ENCODE measurements at regions of chr22 and their contacts with region 1.

Region 1: DNA sequence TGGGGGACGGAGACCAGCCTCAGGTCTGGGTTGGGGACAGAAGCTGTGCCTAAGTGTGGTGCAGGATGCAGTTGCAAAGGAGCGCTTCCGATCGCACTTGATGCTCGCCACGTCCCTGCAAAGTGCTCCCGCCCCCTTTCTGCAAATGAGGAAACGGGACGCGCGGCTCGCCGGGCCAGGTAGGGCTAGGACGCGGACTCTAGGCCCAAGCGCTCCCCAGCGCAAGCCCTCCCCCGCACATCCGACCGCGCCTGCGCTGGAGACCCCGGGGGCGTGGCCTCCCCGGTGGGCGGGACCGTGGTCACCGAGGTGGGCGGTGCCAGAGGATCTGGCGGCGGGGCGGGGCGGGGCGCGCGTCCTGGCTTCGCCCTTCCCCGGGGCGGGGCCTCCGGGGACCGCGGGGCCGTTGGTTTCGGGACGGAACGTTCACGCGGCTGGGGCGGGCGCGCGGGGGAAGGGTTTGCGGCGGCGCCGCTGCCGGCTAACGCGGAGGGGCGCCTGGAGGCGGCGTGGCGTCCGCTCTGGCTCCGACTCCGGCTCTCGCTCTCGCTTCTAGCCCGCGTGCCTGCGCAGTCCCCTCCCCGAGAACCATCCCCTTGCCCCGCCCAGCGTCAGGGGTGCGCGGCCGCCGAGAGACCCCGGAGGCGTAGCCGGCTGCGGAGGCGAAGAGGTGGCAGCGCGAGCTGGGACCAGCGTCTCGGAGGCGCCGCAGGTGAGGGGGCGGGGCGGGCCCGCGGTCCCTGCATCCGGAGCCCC is at the start of gene FAM118A:
- DNase-seq: peak; percentile 89 to 100 (median 96)
- ATAC-seq: peak; percentile 84
- H3K4me3 ChIP-seq: peak within 1 kb of the TSS; percentile 88 to 93
- H3K4me3 Mint-ChIP-seq: peak within 1 kb of the TSS; percentile 89
- H3K27ac ChIP-seq: peak within 1 kb of the TSS; percentile 76 to 86
- H3K27ac Mint-ChIP-seq: peak within 1 kb of the TSS; percentile 91
- H3K4me1 ChIP-seq: peaks cover 32% of the 10 kb centered on the region
- H3K4me1 Mint-ChIP-seq: peaks cover 45% of the 10 kb centered on the region
- H3K27me3 ChIP-seq: no peaks in the 10 kb centered on the region
- H3K27me3 Mint-ChIP-seq: no peaks in the 10 kb centered on the region
- CTCF ChIP-seq: no peak
- total RNA-seq, gene FAM118A: 194 to 196 TPM

Region 2: DNA sequence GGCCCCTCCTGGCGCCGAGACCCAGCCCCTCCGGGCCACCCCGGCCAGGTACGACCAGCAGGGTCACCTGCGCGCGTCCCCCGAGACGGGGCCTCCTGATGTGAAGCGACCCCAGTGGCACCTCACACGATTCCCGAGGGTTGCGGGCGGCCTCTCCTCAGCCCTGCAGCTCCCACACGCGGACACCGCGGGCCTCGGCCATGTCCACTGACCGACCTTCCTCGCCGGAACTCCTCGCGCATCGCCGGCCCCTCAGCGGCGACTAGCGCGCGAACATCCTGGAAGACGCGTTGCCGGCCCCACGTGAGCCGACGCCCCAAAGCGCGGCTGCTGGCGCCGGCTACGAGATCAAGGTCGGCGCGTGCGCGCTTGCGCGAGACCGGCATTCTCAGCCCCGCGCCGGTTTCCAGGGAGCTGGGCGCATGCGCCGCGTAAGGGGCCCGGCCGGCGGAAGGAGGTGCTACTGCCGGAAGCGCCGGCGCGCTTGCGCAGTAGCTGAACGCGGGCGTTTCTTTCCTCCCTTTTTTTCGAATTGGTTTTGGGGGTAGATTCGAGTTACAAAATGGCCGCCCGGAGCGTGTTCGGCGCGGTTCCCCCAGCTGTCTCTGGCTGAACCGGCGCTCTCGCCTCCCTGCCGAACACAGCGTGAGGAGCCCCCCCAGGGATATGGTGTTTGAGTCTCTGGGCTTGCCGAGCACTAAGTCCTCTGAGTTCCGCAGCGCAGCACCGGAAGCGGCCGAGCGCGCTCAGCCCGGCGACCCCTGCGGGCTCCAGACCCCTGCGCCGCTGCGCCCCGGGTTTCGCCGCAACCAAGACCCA is 146.0 kb before region 1 on chr22 and contains the start of gene NUP50:
- CTCF ChIA-PET with region 1: no interaction called
- POLR2A ChIA-PET with region 1: no interaction called
- intact Hi-C with region 1: loop called in 1 of 2 experiments (anchors 5 kb)
- DNase-seq: peak; percentile 92 to 99 (median 96)
- ATAC-seq: peak; percentile 83
- H3K4me3 ChIP-seq: peak within 1 kb of the TSS; percentile 86 to 90
- H3K4me3 Mint-ChIP-seq: peak within 1 kb of the TSS; percentile 92
- H3K27ac ChIP-seq: peak within 1 kb of the TSS; percentile 86 to 88
- H3K27ac Mint-ChIP-seq: peak within 1 kb of the TSS; percentile 93
- H3K4me1 ChIP-seq: peaks cover 38% of the 10 kb centered on the region
- H3K4me1 Mint-ChIP-seq: peaks cover 65% of the 10 kb centered on the region
- H3K27me3 ChIP-seq: no peaks in the 10 kb centered on the region
- H3K27me3 Mint-ChIP-seq: no peaks in the 10 kb centered on the region
- CTCF ChIP-seq: no peak
- total RNA-seq, gene NUP50: 133 to 134 TPM

Region 3: DNA sequence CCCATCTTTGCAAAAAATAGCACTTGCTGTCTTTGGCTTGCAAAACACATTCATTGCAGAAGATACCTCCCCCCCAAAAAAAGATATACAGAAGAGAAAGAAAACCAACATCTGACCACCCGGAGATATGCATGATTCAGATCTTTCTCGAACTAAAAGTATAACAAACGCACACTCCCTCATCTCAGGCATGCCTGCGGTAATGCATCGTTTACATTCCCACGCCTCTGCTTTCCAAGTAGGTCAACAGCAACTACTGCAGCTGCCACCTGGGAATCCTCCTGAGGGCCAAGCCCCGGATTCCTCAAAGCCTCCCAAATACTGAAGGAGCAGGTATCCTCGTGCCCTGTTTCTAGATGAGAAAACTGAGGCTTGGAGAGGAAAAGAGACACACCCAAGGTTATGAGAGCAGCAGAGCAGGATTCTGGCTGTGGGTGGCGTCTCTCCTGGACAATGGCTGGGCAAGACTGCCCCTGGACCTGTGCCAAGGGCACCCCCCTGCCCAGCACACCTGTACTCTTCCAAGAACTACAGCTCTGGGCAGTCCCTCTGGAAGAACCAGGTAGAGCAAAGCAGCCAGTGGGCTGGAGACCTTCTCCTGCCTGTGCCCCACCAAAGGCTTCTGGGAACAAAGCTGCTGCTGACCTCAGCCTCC is 107.8 kb before region 1 on chr22:
- CTCF ChIA-PET with region 1: no interaction called
- POLR2A ChIA-PET with region 1: no interaction called
- intact Hi-C with region 1: no loop called
- DNase-seq: no peak
- ATAC-seq: no peak
- H3K4me3 ChIP-seq: no peak overlapping the region
- H3K4me3 Mint-ChIP-seq: no peak overlapping the region
- H3K27ac ChIP-seq: no peak overlapping the region
- H3K27ac Mint-ChIP-seq: no peak overlapping the region
- H3K4me1 ChIP-seq: no peaks in the 10 kb centered on the region
- H3K4me1 Mint-ChIP-seq: no peaks in the 10 kb centered on the region
- H3K27me3 ChIP-seq: no peaks in the 10 kb centered on the region
- H3K27me3 Mint-ChIP-seq: no peaks in the 10 kb centered on the region
- CTCF ChIP-seq: no peak

Region 4: DNA sequence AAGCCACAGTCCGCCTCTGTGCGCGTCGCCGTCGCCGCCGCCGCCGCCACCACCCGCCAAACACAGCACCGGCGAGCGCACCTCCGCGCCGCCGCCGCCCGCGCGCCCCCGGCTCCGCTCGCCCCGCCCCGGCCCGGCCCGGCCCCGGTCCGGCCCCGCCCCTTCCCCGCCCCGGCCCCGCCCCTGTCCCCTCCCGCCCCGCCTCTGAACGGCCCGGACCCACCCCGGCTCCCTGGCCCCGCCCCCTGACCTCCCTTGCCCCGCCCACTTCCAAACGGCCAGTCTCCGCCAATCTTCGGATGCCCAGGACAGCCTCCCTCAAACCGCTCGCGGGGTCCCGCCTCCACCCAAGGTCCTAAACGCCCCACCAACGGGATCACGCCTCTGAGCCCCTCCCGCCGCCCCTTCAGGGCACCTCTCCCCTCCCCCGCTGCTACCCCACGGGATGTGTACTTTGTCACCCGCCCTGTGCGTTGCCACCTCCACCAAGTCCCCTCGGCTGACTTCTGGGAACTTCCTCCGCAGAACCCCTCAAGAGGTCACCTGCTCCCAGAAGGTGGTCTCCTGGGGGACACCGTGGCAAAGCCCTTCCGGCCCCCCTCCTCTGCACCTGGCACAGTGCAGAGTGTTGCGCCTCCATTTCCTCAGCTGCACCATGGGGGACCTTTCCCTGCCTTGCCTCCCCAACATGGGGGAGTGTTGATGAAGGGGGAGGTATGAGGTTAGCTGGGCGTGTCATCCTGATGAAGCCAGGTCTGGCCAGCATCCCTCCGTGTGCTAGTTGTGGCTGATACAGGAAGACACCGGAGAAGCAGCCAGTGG is 68.6 kb before region 1 on chr22 and contains the start of gene KIAA0930:
- CTCF ChIA-PET with region 1: no interaction called
- POLR2A ChIA-PET with region 1: no interaction called
- intact Hi-C with region 1: loop called (anchors 1 kb)
- DNase-seq: peak; percentile 73 to 93 (median 82)
- ATAC-seq: peak; percentile 75
- H3K4me3 ChIP-seq: peak within 1 kb of the TSS; percentile 70 to 76
- H3K4me3 Mint-ChIP-seq: peak within 1 kb of the TSS; percentile 91
- H3K27ac ChIP-seq: peak within 1 kb of the TSS; percentile 20 to 75
- H3K27ac Mint-ChIP-seq: peak within 1 kb of the TSS; percentile 87
- H3K4me1 ChIP-seq: peaks cover 28% of the 10 kb centered on the region
- H3K4me1 Mint-ChIP-seq: peaks cover 47% of the 10 kb centered on the region
- H3K27me3 ChIP-seq: no peaks in the 10 kb centered on the region
- H3K27me3 Mint-ChIP-seq: no peaks in the 10 kb centered on the region
- CTCF ChIP-seq: no peak
- total RNA-seq, gene KIAA0930: 6.6 to 11.7 TPM

Region 5: GRCh38 chr22:45268958-45269844 is 40.4 kb before region 1 on chr22:
- CTCF ChIA-PET with region 1: interaction called, 5 read pairs
- POLR2A ChIA-PET with region 1: no interaction called
- intact Hi-C with region 1: loop called (anchors 1 kb)
- DNase-seq: peak; percentile 84 to 97 (median 92)
- ATAC-seq: peak; percentile 97
- H3K4me3 ChIP-seq: peak overlapping the region; percentile 59 to 67
- H3K4me3 Mint-ChIP-seq: peak overlapping the region; percentile 83
- H3K27ac ChIP-seq: no peak overlapping the region
- H3K27ac Mint-ChIP-seq: no peak overlapping the region
- H3K4me1 ChIP-seq: peaks cover 10% of the 10 kb centered on the region
- H3K4me1 Mint-ChIP-seq: peaks cover 9% of the 10 kb centered on the region
- H3K27me3 ChIP-seq: peaks cover 0 to 8% of the 10 kb centered on the region in 2 experiments
- H3K27me3 Mint-ChIP-seq: peaks cover 6% of the 10 kb centered on the region
- CTCF ChIP-seq: peak; percentile 85

Region 6: GRCh38 chr22:45296628-45297297 is 12.9 kb before region 1 on chr22:
- CTCF ChIA-PET with region 1: interaction called, 4 read pairs
- POLR2A ChIA-PET with region 1: interaction called, 8 read pairs
- intact Hi-C with region 1: loop called in 1 of 2 experiments (anchors 1 kb)
- DNase-seq: peak in 8 of 9 experiments; percentile 27 to 76 (median 50)
- ATAC-seq: peak; percentile 93
- H3K4me3 ChIP-seq: no peak overlapping the region
- H3K4me3 Mint-ChIP-seq: peak overlapping the region; percentile 58
- H3K27ac ChIP-seq: peak overlapping the region; percentile 39 to 52
- H3K27ac Mint-ChIP-seq: peak overlapping the region; percentile 91
- H3K4me1 ChIP-seq: peaks cover 20% of the 10 kb centered on the region
- H3K4me1 Mint-ChIP-seq: peaks cover 25% of the 10 kb centered on the region
- H3K27me3 ChIP-seq: no peaks in the 10 kb centered on the region
- H3K27me3 Mint-ChIP-seq: no peaks in the 10 kb centered on the region
- CTCF ChIP-seq: no peak

Region 7: GRCh38 chr22:45413368-45414211 is 103.9 kb after region 1 on chr22 and contains the starts of genes RIBC2 and SMC1B:
- CTCF ChIA-PET with region 1: interaction called, 5 read pairs
- POLR2A ChIA-PET with region 1: no interaction called
- intact Hi-C with region 1: loop called in 1 of 2 experiments (anchors 2 kb)
- DNase-seq: peak; percentile 58 to 89 (median 78)
- ATAC-seq: peak; percentile 88
- H3K4me3 ChIP-seq: peak within 1 kb of the TSS; percentile 39 to 57
- H3K4me3 Mint-ChIP-seq: peak within 1 kb of the TSS; percentile 84
- H3K27ac ChIP-seq: peak within 1 kb of the TSS in 1 of 2 experiments; percentile 70
- H3K27ac Mint-ChIP-seq: peak within 1 kb of the TSS; percentile 38
- H3K4me1 ChIP-seq: peaks cover 9% of the 10 kb centered on the region
- H3K4me1 Mint-ChIP-seq: peaks cover 15% of the 10 kb centered on the region
- H3K27me3 ChIP-seq: no peaks in the 10 kb centered on the region
- H3K27me3 Mint-ChIP-seq: no peaks in the 10 kb centered on the region
- CTCF ChIP-seq: no peak
- total RNA-seq, gene RIBC2: 0.67 to 0.98 TPM
- total RNA-seq, gene SMC1B: not detected

Region 8: GRCh38 chr22:45435544-45436139 is 126.0 kb after region 1 on chr22:
- CTCF ChIA-PET with region 1: interaction called, 4 read pairs
- POLR2A ChIA-PET with region 1: no interaction called
- intact Hi-C with region 1: loop called in 1 of 2 experiments (anchors 1 kb)
- DNase-seq: peak; percentile 57 to 89 (median 83)
- ATAC-seq: peak; percentile 97
- H3K4me3 ChIP-seq: no peak overlapping the region
- H3K4me3 Mint-ChIP-seq: no peak overlapping the region
- H3K27ac ChIP-seq: no peak overlapping the region
- H3K27ac Mint-ChIP-seq: peak overlapping the region; percentile 10
- H3K4me1 ChIP-seq: peaks cover 6% of the 10 kb centered on the region
- H3K4me1 Mint-ChIP-seq: peaks cover 12% of the 10 kb centered on the region
- H3K27me3 ChIP-seq: no peaks in the 10 kb centered on the region
- H3K27me3 Mint-ChIP-seq: no peaks in the 10 kb centered on the region
- CTCF ChIP-seq: peak; percentile 95